ENCODE measurements at regions of chr13 and their contacts with region 1.

Region 1: GRCh38 chr13:49300739-49301589 is 53.2 kb downstream of the CDADC1 start:
- DNase-seq: peak in 7 of 10 donors; percentile 48 to 89 (median 57)

Region 2: DNA sequence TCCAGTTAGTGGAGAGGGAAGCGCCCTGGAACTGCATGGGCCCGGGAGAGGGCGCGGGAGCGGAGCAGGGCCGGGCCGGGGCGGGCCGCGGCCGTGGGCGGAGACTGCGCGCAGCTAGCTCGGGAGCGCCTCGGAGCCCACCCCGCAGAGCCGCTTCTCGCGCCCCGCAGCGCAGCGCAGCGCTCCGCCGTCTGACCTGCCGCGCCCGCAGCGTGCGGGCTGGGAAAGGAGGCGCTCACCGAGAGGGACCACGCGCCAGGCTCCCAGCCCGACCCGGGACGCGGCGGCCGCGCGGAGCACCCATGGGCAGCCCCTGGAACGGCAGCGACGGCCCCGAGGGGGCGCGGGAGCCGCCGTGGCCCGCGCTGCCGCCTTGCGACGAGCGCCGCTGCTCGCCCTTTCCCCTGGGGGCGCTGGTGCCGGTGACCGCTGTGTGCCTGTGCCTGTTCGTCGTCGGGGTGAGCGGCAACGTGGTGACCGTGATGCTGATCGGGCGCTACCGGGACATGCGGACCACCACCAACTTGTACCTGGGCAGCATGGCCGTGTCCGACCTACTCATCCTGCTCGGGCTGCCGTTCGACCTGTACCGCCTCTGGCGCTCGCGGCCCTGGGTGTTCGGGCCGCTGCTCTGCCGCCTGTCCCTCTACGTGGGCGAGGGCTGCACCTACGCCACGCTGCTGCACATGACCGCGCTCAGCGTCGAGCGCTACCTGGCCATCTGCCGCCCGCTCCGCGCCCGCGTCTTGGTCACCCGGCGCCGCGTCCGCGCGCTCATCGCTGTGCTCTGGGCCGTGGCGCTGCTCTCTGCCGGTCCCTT is 80.7 kb before region 1 on chr13 and contains the start of gene MLNR:
- intact Hi-C with region 1: no loop called
- DNase-seq: peak in 2 of 10 donors; percentile 21 to 78

Region 3: DNA sequence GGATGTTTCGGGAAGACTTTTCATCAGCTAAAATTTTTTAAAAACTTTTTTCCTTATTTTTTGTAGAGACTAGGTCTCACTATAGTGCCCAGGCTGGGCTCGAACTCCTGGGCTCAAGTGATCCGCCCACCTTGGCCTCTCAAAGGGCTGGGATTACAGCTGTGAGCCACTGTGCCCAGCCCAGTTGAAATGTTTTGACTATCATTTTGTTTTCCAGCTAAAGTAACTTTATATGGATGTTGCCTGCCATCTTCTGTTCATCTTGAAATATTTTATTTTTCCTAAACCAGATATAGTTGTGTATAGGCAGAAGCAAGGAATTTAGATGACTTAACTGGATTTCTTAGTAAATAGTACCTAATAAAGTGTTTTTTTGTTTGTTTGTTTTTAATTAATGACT is 135.9 kb after region 1 on chr13:
- intact Hi-C with region 1: loop called (anchors 2 kb)
- DNase-seq: peak in 5 of 10 donors; percentile 7 to 86 (median 26)

Measured in posterior cingulate gyrus (tissue), 11 donors.